Activated naive CD4-positive, alpha-beta T cell treated with anti-CD3 and anti-CD28 coated beads for 36 hours (primary cell): ENCODE measurements at regions of chr7 and their contacts with region 1.

Region 1: GRCh38 chr7:23863209-23863798 is 153.3 kb downstream of the STK31 start:
- DNase-seq: peak; percentile 46
- H3K4me3 Mint-ChIP-seq: no peak overlapping the region
- H3K27ac Mint-ChIP-seq: no peak overlapping the region
- H3K4me1 Mint-ChIP-seq: no peaks in the 10 kb centered on the region
- H3K27me3 Mint-ChIP-seq: peaks cover 8% of the 10 kb centered on the region

Region 2: GRCh38 chr7:24381894-24382505 is 518.7 kb after region 1 on chr7:
- CTCF ChIA-PET with region 1: no interaction called
- intact Hi-C with region 1: loop called (anchors 1 kb)
- DNase-seq: no peak
- H3K4me3 Mint-ChIP-seq: no peak overlapping the region
- H3K27ac Mint-ChIP-seq: no peak overlapping the region
- H3K4me1 Mint-ChIP-seq: no peaks in the 10 kb centered on the region
- H3K27me3 Mint-ChIP-seq: no peaks in the 10 kb centered on the region